Left ventricle myocardium superior (tissue), 1 donor: ENCODE measurements at regions of chr16 and their contacts with region 1.

Region 1: DNA sequence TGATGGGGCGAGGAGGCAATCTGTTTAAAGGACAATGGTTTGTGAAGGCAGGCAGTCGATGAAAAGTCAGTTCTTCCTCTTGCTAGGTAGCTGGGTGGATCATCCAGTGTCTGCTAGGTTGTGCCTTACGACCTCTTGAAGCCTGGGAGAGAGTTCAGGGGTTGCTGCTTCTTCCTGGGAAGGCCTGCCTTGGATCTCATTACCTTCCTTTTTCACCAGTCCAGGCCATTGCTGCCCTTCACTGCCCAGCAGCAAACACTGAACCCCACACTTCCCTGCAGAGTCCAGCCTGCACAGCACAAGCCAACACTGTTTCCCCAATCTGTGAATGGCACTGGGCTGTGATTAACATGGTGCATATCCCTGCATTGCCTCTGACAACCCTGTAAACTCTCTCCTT is 24.7 kb downstream of the HS3ST2 start:
- DNase-seq: no peak
- ATAC-seq: no peak

Region 2: GRCh38 chr16:22770866-22771265 is 67.8 kb before region 1 on chr16:
- intact Hi-C with region 1: loop called (anchors 10 kb)
- DNase-seq: no peak
- ATAC-seq: no peak

Region 3: GRCh38 chr16:23941963-23942564 is 1103.4 kb after region 1 on chr16:
- intact Hi-C with region 1: no loop called
- DNase-seq: no peak
- ATAC-seq: no peak